Activated CD4-positive, alpha-beta memory T cell treated with anti-CD3 and anti-CD28 coated beads for 36 hours (primary cell): ENCODE measurements at regions of chr18 and their contacts with region 1.

Region 1: GRCh38 chr18:58768293-58768974 is 96.2 kb upstream of the ZNF532 start:
- DNase-seq: peak; percentile 85
- H3K4me3 Mint-ChIP-seq: no peak overlapping the region
- H3K27ac Mint-ChIP-seq: no peak overlapping the region
- H3K4me1 Mint-ChIP-seq: peaks cover 3% of the 10 kb centered on the region
- H3K27me3 Mint-ChIP-seq: peaks cover 35% of the 10 kb centered on the region

Region 2: GRCh38 chr18:58402247-58402646 is 366.2 kb before region 1 on chr18:
- CTCF ChIA-PET with region 1: interaction called, 5 read pairs
- POLR2A ChIA-PET with region 1: no interaction called
- intact Hi-C with region 1: loop called (anchors 1 kb)
- DNase-seq: no peak
- H3K4me3 Mint-ChIP-seq: no peak overlapping the region
- H3K27ac Mint-ChIP-seq: no peak overlapping the region
- H3K4me1 Mint-ChIP-seq: peaks cover 15% of the 10 kb centered on the region
- H3K27me3 Mint-ChIP-seq: peaks cover 2% of the 10 kb centered on the region

Region 3: GRCh38 chr18:58529714-58530354 is 238.6 kb before region 1 on chr18:
- CTCF ChIA-PET with region 1: interaction called, 442 read pairs
- POLR2A ChIA-PET with region 1: interaction called, 3 read pairs
- intact Hi-C with region 1: loop called (anchors 1 kb)
- DNase-seq: peak; percentile 76
- H3K4me3 Mint-ChIP-seq: no peak overlapping the region
- H3K27ac Mint-ChIP-seq: peak overlapping the region; percentile 43
- H3K4me1 Mint-ChIP-seq: peaks cover 19% of the 10 kb centered on the region
- H3K27me3 Mint-ChIP-seq: peaks cover 6% of the 10 kb centered on the region

Region 4: GRCh38 chr18:58699551-58699950 is 68.9 kb before region 1 on chr18:
- CTCF ChIA-PET with region 1: interaction called, 15 read pairs
- POLR2A ChIA-PET with region 1: no interaction called
- intact Hi-C with region 1: loop called (anchors 5 kb)
- DNase-seq: no peak
- H3K4me3 Mint-ChIP-seq: no peak overlapping the region
- H3K27ac Mint-ChIP-seq: no peak overlapping the region
- H3K4me1 Mint-ChIP-seq: peaks cover 40% of the 10 kb centered on the region
- H3K27me3 Mint-ChIP-seq: no peaks in the 10 kb centered on the region

Region 5: DNA sequence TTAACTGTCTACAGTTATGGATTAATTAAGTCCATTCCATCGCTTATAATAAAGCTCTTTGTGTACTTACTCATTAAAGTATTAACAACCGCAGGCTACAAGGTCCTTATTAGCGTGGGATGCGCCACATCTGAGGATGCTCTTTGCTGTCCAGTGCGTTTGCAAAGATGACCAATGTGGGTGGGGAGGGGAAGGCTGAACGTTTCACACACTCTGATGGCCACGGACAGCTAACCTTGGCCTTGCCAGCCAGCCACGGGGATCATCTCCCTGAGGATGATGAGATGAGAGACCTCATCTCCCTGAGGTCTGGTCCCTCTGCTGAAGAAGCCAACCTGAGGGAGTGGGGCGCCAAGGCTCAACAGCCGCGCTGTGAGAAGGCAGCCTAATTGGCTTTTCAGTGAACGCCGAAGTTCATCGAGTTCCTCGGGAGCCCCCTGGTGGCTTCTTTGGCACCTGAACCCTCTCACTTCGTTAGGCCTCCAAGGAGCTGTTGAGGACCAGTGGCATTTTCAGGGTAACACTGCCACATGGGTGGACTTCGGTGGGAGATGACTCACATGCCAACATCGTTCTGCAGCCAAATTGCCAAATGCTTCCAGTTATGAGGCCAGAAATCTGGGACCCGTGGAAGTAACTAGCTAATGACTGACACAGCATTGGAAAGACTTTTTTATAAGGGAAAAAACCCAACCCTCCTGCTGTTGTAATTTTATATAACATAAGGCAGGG is 301.9 kb after region 1 on chr18:
- CTCF ChIA-PET with region 1: interaction called, 109 read pairs
- POLR2A ChIA-PET with region 1: no interaction called
- intact Hi-C with region 1: loop called (anchors 1 kb)
- DNase-seq: peak; percentile 85
- H3K4me3 Mint-ChIP-seq: no peak overlapping the region
- H3K27ac Mint-ChIP-seq: no peak overlapping the region
- H3K4me1 Mint-ChIP-seq: peaks cover 2% of the 10 kb centered on the region
- H3K27me3 Mint-ChIP-seq: peaks cover 1% of the 10 kb centered on the region